Calu3 (cell line): ENCODE measurements at regions of chr1 and their contacts with region 1.

Region 1: GRCh38 chr1:63691701-63692425 is 82.0 kb upstream of the ROR1 start:
- DNase-seq: peak; percentile 70
- H3K4me3 Mint-ChIP-seq: no peak overlapping the region
- H3K27ac Mint-ChIP-seq: peak overlapping the region; percentile 53
- H3K4me1 Mint-ChIP-seq: peaks cover 49% of the 10 kb centered on the region
- H3K27me3 Mint-ChIP-seq: no peaks in the 10 kb centered on the region
- CTCF ChIP-seq: peak; percentile 67

Region 2: DNA sequence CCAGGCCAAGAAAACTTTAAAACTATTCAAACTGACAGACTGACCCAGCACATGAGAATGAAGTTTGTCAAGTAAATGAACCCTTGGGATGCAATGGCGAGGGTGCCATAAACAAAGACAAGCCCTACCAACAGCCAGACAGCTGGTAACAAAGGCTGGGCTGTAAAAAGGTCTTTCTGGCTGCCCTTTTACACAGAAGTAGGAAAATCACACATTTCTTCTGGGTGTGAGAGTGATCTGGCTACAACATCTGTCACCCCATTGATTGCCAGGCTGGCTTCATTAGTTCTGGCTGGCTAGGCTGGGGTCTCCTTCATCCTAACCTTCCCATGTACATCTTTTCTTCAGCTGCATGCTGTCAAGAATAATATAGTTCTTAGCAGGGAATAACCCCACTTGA is 453.1 kb before region 1 on chr1:
- CTCF ChIA-PET with region 1: no interaction called
- intact Hi-C with region 1: no loop called
- DNase-seq: no peak
- H3K4me3 Mint-ChIP-seq: no peak overlapping the region
- H3K27ac Mint-ChIP-seq: no peak overlapping the region
- H3K4me1 Mint-ChIP-seq: no peaks in the 10 kb centered on the region
- H3K27me3 Mint-ChIP-seq: no peaks in the 10 kb centered on the region
- CTCF ChIP-seq: no peak

Region 3: DNA sequence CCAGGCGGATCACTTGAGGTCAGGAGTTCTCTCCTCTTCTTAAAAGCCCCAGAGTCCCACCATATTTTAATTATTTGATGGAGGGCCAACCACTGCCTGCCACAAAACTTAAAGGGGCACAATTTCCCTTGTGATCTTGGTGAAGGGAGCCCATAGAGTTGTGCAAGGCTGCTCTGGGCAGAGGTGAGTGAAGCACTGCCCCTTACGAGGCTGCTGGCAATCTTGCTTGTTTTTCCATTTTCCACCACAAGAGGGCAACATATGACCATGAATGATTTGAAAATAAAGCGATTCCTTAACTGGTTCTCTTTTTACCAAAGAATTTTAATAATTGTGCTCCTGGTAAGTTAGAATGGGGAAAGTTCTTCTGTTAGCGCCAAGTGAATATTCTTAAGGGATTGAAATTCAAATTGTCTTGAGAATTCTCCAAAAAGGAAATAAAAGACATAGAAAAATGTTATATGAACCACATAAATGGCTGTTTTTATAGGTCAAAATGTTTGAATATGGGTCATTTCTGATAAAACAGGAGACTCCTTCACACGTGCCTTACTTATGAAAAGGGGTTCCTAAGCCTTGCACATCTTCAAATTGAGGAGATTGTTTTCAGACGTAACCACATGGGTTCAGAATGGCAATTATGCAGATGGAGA is 76.0 kb before region 1 on chr1:
- CTCF ChIA-PET with region 1: interaction called, 6 read pairs
- intact Hi-C with region 1: loop called (anchors 2 kb)
- DNase-seq: peak; percentile 79
- H3K4me3 Mint-ChIP-seq: no peak overlapping the region
- H3K27ac Mint-ChIP-seq: no peak overlapping the region
- H3K4me1 Mint-ChIP-seq: peaks cover 49% of the 10 kb centered on the region
- H3K27me3 Mint-ChIP-seq: no peaks in the 10 kb centered on the region
- CTCF ChIP-seq: peak; percentile 87

Region 4: DNA sequence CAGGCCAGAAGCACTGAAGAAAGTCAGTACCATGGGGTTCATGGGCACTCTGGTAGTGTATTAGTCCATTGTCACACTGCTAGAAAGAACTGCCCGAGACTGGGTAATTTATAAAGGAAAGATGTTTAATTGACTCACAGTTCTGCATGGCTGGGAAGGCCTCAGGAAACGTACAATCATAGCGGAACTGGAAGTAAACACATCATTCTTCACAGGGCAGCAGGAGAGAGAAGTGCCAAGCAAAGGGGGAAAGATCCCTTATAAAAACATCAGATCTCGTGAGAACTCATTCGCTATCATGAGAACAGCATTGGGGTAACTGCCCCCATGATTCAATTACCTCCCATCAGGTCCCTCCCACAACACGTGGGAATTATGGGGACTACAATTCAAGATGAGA is 61.7 kb after region 1 on chr1:
- CTCF ChIA-PET with region 1: no interaction called
- intact Hi-C with region 1: no loop called
- DNase-seq: no peak
- H3K4me3 Mint-ChIP-seq: no peak overlapping the region
- H3K27ac Mint-ChIP-seq: no peak overlapping the region
- H3K4me1 Mint-ChIP-seq: peaks cover 8% of the 10 kb centered on the region
- H3K27me3 Mint-ChIP-seq: no peaks in the 10 kb centered on the region
- CTCF ChIP-seq: no peak

Region 5: DNA sequence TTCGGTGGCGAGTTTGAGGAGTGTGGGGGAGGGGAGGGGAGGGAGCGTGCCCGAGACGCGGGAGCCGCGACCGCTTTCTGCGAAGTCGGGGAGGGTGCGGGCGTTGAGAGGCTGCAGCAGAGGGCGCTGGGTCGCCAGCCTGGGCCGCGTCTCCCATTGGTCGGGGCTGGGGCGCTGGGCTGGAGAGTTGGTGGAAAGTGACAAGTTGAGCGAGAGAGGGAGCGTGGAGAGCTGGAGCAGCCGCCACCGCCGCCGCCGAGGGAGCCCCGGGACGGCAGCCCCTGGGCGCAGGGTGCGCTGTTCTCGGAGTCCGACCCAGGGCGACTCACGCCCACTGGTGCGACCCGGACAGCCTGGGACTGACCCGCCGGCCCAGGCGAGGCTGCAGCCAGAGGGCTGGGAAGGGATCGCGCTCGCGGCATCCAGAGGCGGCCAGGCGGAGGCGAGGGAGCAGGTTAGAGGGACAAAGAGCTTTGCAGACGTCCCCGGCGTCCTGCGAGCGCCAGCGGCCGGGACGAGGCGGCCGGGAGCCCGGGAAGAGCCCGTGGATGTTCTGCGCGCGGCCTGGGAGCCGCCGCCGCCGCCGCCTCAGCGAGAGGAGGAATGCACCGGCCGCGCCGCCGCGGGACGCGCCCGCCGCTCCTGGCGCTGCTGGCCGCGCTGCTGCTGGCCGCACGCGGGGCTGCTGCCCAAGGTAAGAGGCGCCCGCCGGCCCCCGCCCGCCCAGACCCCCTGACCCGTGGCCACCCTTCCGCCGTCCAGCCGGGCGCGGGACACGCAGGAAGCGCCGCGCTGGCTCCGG is 82.2 kb after region 1 on chr1 and contains the start of gene ROR1:
- CTCF ChIA-PET with region 1: interaction called, 15 read pairs
- intact Hi-C with region 1: loop called (anchors 2 kb)
- DNase-seq: peak; percentile 94
- H3K4me3 Mint-ChIP-seq: peak within 1 kb of the TSS; percentile 99
- H3K27ac Mint-ChIP-seq: peak within 1 kb of the TSS; percentile 79
- H3K4me1 Mint-ChIP-seq: peaks cover 58% of the 10 kb centered on the region
- H3K27me3 Mint-ChIP-seq: no peaks in the 10 kb centered on the region
- CTCF ChIP-seq: peak; percentile 81
- total RNA-seq, gene ROR1: 24.5 and 33.8 TPM in 2 replicates

Region 6: GRCh38 chr1:63868268-63868781 is 176.5 kb after region 1 on chr1:
- CTCF ChIA-PET with region 1: interaction called, 18 read pairs
- intact Hi-C with region 1: loop called (anchors 1 kb)
- DNase-seq: no peak
- H3K4me3 Mint-ChIP-seq: no peak overlapping the region
- H3K27ac Mint-ChIP-seq: peak overlapping the region; percentile 55
- H3K4me1 Mint-ChIP-seq: peaks cover 66% of the 10 kb centered on the region
- H3K27me3 Mint-ChIP-seq: no peaks in the 10 kb centered on the region
- CTCF ChIP-seq: no peak

Region 7: GRCh38 chr1:63877816-63878215 is 186.0 kb after region 1 on chr1:
- CTCF ChIA-PET with region 1: interaction called, 4 read pairs
- intact Hi-C with region 1: loop called (anchors 2 kb)
- DNase-seq: peak; percentile 67
- H3K4me3 Mint-ChIP-seq: no peak overlapping the region
- H3K27ac Mint-ChIP-seq: peak overlapping the region; percentile 68
- H3K4me1 Mint-ChIP-seq: peaks cover 87% of the 10 kb centered on the region
- H3K27me3 Mint-ChIP-seq: no peaks in the 10 kb centered on the region
- CTCF ChIP-seq: no peak

Region 8: GRCh38 chr1:64136752-64137411 is 445.0 kb after region 1 on chr1:
- CTCF ChIA-PET with region 1: interaction called, 28 read pairs
- intact Hi-C with region 1: loop called (anchors 1 kb)
- DNase-seq: peak; percentile 82
- H3K4me3 Mint-ChIP-seq: no peak overlapping the region
- H3K27ac Mint-ChIP-seq: no peak overlapping the region
- H3K4me1 Mint-ChIP-seq: peaks cover 20% of the 10 kb centered on the region
- H3K27me3 Mint-ChIP-seq: no peaks in the 10 kb centered on the region
- CTCF ChIP-seq: peak; percentile 86